Activated CD8-positive, alpha-beta T cell treated with anti-CD3 and anti-CD28 coated beads, Interleukin-2, amount 10 ng/mL, durations not matched to agents 7 days and 5 days (primary cell): ENCODE measurements at regions of chr11 and their contacts with region 1.

Region 1: DNA sequence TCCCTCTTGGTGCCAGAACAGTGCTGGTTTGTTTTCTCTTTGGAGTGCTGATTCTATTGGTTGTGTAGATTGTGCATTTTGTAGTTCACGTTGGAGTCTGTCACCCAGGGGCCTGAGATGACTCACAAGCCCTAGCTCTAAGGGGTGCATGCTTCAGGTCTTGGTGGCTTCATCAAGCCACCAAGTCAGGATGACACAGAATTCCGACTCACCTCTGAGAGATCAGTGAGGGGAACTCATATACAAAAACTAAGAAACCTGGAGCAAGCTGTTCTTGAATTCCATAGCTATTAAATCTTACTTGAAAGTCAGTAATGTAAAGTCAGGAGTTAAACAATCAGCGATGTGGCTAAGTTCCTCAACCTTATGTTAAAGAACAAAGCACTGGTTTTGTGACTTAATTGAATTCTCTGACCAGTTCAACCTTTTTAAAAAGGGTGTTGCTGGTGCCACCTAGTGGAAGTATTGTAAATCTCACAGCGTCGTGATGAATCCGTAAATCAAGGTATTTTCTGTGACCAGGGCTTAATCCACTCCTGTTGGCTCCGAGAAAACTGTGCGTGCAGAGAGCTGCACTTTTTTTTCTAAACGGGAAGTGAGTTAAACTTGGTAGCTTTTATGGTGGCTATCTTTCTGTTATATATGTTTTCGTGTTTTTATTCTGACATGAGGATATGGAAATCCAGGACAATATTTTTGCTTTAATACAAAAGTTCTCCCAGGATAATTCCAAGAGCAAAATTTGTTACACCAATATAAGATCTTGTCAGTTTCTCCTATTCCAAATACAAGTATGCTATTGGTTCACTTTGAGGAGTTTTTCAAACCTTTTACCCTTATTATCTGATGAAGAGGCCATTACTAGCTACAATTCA is 14.6 kb downstream of the MMP13 start:
- DNase-seq: peak; percentile 54
- ATAC-seq: peak; percentile 82
- H3K4me3 Mint-ChIP-seq: no peak overlapping the region
- H3K27ac Mint-ChIP-seq: no peak overlapping the region
- H3K4me1 Mint-ChIP-seq: peaks cover 2% of the 10 kb centered on the region
- H3K27me3 Mint-ChIP-seq: peaks cover 2% of the 10 kb centered on the region

Region 2: GRCh38 chr11:102831489-102832440 is 109.2 kb before region 1 on chr11:
- CTCF ChIA-PET with region 1: interaction called, 13 read pairs
- POLR2A ChIA-PET with region 1: no interaction called
- DNase-seq: peak; percentile 23
- ATAC-seq: no peak
- H3K4me3 Mint-ChIP-seq: no peak overlapping the region
- H3K27ac Mint-ChIP-seq: no peak overlapping the region
- H3K4me1 Mint-ChIP-seq: no peaks in the 10 kb centered on the region
- H3K27me3 Mint-ChIP-seq: peaks cover 24% of the 10 kb centered on the region

Region 3: DNA sequence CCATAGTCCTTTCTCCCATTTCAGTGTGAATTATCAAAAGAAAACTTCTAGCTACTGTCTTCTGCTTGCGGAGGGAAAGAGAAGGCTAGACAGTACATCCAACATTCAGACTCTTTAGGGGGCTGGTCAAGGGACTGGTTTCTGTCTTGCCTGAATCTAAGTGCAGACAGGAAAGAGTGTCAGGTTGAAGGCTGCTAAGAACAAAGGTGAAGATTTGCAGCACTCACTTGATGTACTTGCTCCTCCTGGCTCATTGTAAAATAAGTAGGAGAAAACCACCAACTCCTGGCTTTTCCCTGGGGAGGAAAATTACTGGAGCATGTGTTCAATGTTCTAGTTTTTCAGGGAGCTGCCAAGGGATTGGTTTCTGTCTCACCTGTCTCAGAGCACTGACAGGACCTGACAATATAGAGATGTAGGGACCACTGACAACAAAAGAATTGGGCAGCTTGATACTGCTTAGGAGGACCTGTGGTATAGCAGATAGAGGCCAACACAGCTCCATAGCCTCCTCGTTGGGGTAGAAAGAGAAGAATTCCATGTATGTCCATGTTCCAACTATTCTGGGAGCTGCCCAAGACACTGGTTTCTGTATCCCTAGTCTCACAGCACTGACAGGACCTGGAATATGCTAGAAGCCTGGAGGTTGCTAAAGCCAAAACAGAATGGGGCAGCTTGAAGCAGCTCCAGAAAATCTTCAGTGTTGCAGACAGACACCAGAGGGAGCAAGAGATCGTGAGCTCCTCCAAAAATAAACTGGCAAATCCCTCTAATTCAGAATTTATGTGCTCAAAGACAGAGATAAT is 26.5 kb before region 1 on chr11:
- CTCF ChIA-PET with region 1: interaction called, 11 read pairs
- POLR2A ChIA-PET with region 1: no interaction called
- DNase-seq: no peak
- ATAC-seq: no peak
- H3K4me3 Mint-ChIP-seq: no peak overlapping the region
- H3K27ac Mint-ChIP-seq: no peak overlapping the region
- H3K4me1 Mint-ChIP-seq: no peaks in the 10 kb centered on the region
- H3K27me3 Mint-ChIP-seq: peaks cover 7% of the 10 kb centered on the region

Region 4: DNA sequence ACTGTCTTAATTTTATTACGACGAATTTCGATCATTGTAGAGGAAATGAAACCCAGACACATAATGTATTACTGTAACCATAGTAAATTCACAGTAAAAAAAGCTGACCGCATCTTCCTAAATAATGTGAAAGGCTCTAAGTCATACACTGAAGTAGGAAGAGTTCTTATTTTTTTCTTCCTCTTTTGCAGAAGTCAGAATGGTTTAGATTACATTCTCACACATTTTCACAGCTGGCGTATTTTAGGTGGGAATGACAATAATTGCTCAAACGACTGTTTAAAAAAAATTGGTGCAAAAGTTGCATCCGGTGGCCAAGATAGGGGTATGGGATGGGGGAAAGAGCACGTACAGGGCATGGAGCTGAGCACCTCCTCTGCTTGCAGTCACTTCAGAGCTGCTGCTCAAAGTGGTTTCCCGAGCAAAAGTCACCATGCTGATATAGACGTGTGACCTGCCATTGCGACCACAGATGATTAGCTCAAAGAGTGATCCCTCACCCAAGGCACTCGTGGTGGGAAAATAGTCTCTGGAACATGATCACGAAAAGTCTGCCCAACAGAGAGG is 20.8 kb before region 1 on chr11:
- CTCF ChIA-PET with region 1: interaction called, 11 read pairs
- POLR2A ChIA-PET with region 1: no interaction called
- DNase-seq: no peak
- ATAC-seq: no peak
- H3K4me3 Mint-ChIP-seq: no peak overlapping the region
- H3K27ac Mint-ChIP-seq: no peak overlapping the region
- H3K4me1 Mint-ChIP-seq: peaks cover 5% of the 10 kb centered on the region
- H3K27me3 Mint-ChIP-seq: peaks cover 14% of the 10 kb centered on the region